ENCODE measurements at regions of chr17 and their contacts with region 1.

Region 1: DNA sequence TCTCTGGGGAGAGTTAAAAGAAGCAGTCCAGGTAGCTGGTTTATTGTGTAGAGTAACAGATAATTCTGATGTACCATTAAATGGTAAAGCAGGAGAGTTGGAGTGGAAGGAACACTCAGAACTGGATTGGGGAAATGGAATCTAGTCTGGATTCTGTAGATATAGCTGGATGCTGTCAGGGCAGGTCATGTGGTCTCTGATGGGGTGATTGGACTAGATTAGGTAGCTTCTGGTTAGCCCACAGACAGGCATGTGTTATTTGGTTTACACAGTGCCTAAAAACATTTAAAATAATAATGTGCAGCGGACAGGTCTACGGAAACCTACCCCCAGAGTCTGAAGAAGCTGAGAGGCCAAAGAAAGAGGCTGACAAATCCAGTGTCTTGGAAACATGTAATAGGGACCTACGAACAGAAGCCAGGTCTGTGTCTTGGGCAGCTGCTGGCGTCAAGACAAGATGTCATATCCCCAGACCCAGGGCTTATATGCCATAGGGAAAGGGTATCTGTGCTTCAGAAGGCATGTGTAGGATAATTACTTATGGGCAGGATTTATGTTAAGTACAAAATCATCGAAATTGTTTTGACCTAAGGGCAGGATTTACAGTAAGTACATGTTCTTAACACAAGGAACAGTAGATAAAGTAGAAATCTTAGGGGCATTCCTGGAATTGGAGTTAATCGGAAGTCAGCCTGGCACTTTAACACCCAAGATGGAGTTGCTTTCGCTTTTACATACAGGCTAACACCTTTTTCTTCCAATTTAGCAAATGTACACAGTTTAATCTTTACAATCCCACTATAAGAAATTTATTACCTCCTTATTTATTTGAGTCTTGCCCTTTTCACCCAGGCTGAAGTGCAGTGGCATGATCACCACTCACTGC is 12.4 kb downstream of the LUC7L3 start:
- DNase-seq: no peak
- H3K4me3 ChIP-seq: no peak overlapping the region
- H3K4me3 Mint-ChIP-seq: no peak overlapping the region
- H3K27ac Mint-ChIP-seq: peak overlapping the region; percentile 18
- H3K4me1 ChIP-seq: peaks cover 11% of the 10 kb centered on the region
- H3K4me1 Mint-ChIP-seq: peaks cover 32% of the 10 kb centered on the region
- H3K27me3 ChIP-seq: no peaks in the 10 kb centered on the region
- H3K27me3 Mint-ChIP-seq: no peaks in the 10 kb centered on the region
- CTCF ChIP-seq: no peak

Region 2: GRCh38 chr17:50749245-50749644 is 17.4 kb after region 1 on chr17:
- CTCF ChIA-PET with region 1: no interaction called
- POLR2A ChIA-PET with region 1: interaction called, 17 read pairs
- intact Hi-C with region 1: no loop called
- DNase-seq: no peak
- H3K4me3 ChIP-seq: no peak overlapping the region
- H3K4me3 Mint-ChIP-seq: no peak overlapping the region
- H3K27ac Mint-ChIP-seq: no peak overlapping the region
- H3K4me1 ChIP-seq: peaks cover 9% of the 10 kb centered on the region; the same call in 1 of the 2 replicates
- H3K4me1 Mint-ChIP-seq: no peaks in the 10 kb centered on the region
- H3K27me3 ChIP-seq: no peaks in the 10 kb centered on the region
- H3K27me3 Mint-ChIP-seq: no peaks in the 10 kb centered on the region
- CTCF ChIP-seq: no peak

Region 3: GRCh38 chr17:50798424-50799288 is 66.8 kb after region 1 on chr17:
- CTCF ChIA-PET with region 1: interaction called, 3 read pairs
- POLR2A ChIA-PET with region 1: no interaction called
- intact Hi-C with region 1: loop called (anchors 10 kb)
- DNase-seq: peak; percentile 56 to 65
- H3K4me3 ChIP-seq: no peak overlapping the region
- H3K4me3 Mint-ChIP-seq: no peak overlapping the region
- H3K27ac Mint-ChIP-seq: no peak overlapping the region
- H3K4me1 ChIP-seq: peaks cover 10% of the 10 kb centered on the region; the same call in 1 of the 2 replicates
- H3K4me1 Mint-ChIP-seq: peaks cover 7% of the 10 kb centered on the region
- H3K27me3 ChIP-seq: no peaks in the 10 kb centered on the region
- H3K27me3 Mint-ChIP-seq: no peaks in the 10 kb centered on the region
- CTCF ChIP-seq: no peak

Measured in Caco-2 (cell line).